Heart left ventricle (tissue), 16 donors: ENCODE measurements at regions of chr10 and their contacts with region 1.

Region 1: GRCh38 chr10:118423800-118424479 is 81.8 kb upstream of the FAM204A start:
- DNase-seq: peak; percentile 49 to 83 (median 77)
- ATAC-seq: peak in 3 of 4 donors; percentile 84 to 90 (median 87)
- H3K4me3 ChIP-seq: no peak overlapping the region
- H3K27ac ChIP-seq: no peak overlapping the region
- H3K4me1 ChIP-seq: no peaks in the 10 kb centered on the region
- H3K27me3 ChIP-seq: peaks cover 0 to 14% (median 0%) of the 10 kb centered on the region in 9 donors
- CTCF ChIP-seq: peak; percentile 51 to 82 (median 62)
- POLR2A ChIP-seq: no peak

Region 2: GRCh38 chr10:118341791-118342637 is 81.9 kb before region 1 on chr10 and contains the start of gene FAM204A:
- intact Hi-C with region 1: loop called in 1 of 10 experiments (anchors 10 kb)
- DNase-seq: peak; percentile 94 to 95 (median 94)
- ATAC-seq: peak; percentile 98 to 100 (median 98)
- H3K4me3 ChIP-seq: peak within 1 kb of the TSS; percentile 70 to 98 (median 84)
- H3K27ac ChIP-seq: peak within 1 kb of the TSS; percentile 55 to 90 (median 78)
- H3K4me1 ChIP-seq: peaks cover 0 to 50% (median 37%) of the 10 kb centered on the region in 12 donors
- H3K27me3 ChIP-seq: no peaks in the 10 kb centered on the region
- CTCF ChIP-seq: no peak
- POLR2A ChIP-seq: peak in 1 of 2 donors; percentile 49
- total RNA-seq, gene FAM204A: 41.0 to 75.1 (median 58.3) TPM